Activated T-helper 2 cell treated with anti-CD3 and anti-CD28 coated beads, Interferon-gamma antibody, Interleukin-2, Interleukin-4, amounts not matched to agents 10 μg/mL and 5 μg/mL and 100 μg/mL, durations not matched to agents 14 hours and 24 hours and 36 hours (primary cell): ENCODE measurements at regions of chr17 and their contacts with region 1.

Region 1: GRCh38 chr17:77054936-77055335 is 85.8 kb upstream of the SEC14L1 start:
- DNase-seq: no peak
- H3K4me3 Mint-ChIP-seq: no peak overlapping the region
- H3K27ac Mint-ChIP-seq: no peak overlapping the region
- H3K4me1 Mint-ChIP-seq: peaks cover 2% of the 10 kb centered on the region
- H3K27me3 Mint-ChIP-seq: peaks cover 7% of the 10 kb centered on the region

Region 2: GRCh38 chr17:76868176-76868668 is 186.7 kb before region 1 on chr17 and contains the start of gene MGAT5B:
- intact Hi-C with region 1: loop called (anchors 2 kb)
- DNase-seq: peak; percentile 68
- H3K4me3 Mint-ChIP-seq: peak within 1 kb of the TSS; percentile 77
- H3K27ac Mint-ChIP-seq: no peak within 1 kb of the TSS
- H3K4me1 Mint-ChIP-seq: peaks cover 5% of the 10 kb centered on the region
- H3K27me3 Mint-ChIP-seq: peaks cover 35% of the 10 kb centered on the region
- total RNA-seq, gene MGAT5B: 0.55 TPM in 2 replicates

Region 3: DNA sequence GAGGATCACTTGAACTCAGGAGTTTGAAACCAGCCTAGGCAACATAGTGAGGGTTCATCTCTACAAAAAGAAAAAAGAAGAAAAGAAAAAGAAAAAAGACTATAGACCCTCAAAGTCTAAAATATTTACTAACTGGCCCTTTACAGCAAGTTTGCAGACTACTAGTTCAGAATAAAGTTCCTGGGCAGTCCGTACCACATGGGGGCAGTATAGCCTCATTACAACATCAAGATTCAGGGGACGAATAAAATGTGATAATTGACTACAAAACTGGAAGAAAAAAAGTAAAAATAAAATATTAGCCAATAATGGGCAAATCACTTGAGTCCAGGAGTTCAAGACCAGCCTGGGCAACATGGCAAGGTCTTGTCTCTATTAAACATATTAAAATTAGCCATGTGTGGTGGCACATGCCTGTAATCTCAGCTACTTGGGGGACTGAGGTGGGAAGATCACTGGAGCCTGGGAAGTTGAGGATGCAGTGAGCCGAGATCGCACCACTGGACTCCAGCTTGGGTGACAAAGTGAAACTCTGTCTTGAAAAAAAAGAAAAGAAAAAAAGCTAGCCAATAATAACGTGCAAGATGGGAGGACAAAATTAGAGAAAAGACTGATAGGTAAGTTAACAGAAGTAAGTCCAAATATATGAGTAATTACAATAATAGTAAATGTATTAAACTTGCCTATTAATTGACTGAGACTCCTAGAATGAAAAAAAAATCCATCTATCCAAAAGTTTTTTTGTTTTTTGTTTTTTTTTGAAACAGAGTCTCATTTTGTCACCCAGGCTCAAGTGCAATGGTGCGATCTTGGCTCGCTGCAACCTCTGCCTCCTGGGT is 43.5 kb before region 1 on chr17:
- intact Hi-C with region 1: loop called (anchors 5 kb)
- DNase-seq: no peak
- H3K4me3 Mint-ChIP-seq: no peak overlapping the region
- H3K27ac Mint-ChIP-seq: no peak overlapping the region
- H3K4me1 Mint-ChIP-seq: no peaks in the 10 kb centered on the region
- H3K27me3 Mint-ChIP-seq: peaks cover 23% of the 10 kb centered on the region